ENCODE measurements at regions of chr4 and their contacts with region 1.

Region 1: DNA sequence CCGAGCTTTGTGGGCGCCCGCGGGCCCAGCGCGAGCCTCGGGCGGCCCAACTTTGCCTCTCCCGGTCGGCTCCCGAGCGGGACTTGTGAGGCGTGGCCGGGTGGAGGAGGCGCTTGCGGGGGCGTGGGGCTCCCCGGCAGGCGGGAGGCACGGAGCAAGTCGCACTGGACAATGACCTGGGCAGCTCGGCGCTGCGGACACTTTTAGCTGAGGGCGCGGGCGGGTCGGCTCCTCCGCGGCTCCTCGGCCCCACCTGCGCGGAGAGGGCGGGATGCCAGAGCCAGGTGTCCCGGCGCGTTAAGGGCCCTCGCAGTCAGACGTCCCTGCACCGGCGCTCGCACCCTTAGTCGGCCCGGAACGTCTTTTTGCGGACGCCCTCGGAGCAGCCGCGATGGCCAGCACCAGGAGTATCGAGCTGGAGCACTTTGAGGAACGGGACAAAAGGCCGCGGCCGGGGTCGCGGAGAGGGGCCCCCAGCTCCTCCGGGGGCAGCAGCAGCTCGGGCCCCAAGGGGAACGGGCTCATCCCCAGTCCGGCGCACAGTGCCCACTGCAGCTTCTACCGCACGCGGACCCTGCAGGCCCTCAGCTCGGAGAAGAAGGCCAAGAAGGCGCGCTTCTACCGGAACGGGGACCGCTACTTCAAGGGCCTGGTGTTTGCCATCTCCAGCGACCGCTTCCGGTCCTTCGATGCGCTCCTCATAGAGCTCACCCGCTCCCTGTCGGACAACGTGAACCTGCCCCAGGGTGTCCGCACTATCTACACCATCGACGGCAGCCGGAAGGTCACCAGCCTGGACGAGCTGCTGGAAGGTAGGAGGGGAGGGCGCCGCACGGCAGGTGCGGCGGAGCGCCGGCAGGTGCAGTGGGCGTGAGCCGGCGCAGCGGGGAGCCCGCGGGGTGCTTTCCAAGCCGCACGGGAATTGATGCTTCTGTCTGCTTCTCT is 664 bp downstream of the DCLK2 start:
- DNase-seq: peak; percentile 59 to 62
- H3K4me3 ChIP-seq: peak overlapping the region; percentile 53 to 84 (median 58)
- H3K27ac ChIP-seq: peak overlapping the region; percentile 74 to 88 (median 83)
- H3K4me1 ChIP-seq: peaks cover 4 to 10% of the 10 kb centered on the region in 2 donors
- H3K27me3 ChIP-seq: no peaks in the 10 kb centered on the region
- CTCF ChIP-seq: peak in 3 of 6 experiments; percentile 12 to 24 (median 21)
- POLR2A ChIP-seq: no peak

Region 2: GRCh38 chr4:150237110-150237857 is 158.4 kb after region 1 on chr4:
- intact Hi-C with region 1: loop called (anchors 10 kb)
- DNase-seq: no peak
- H3K4me3 ChIP-seq: no peak overlapping the region
- H3K27ac ChIP-seq: no peak overlapping the region
- H3K4me1 ChIP-seq: peaks cover 2% of the 10 kb centered on the region in 2 donors
- H3K27me3 ChIP-seq: no peaks in the 10 kb centered on the region
- CTCF ChIP-seq: no peak
- POLR2A ChIP-seq: no peak

Region 3: GRCh38 chr4:150619042-150619441 is 540.1 kb after region 1 on chr4:
- intact Hi-C with region 1: no loop called
- DNase-seq: no peak
- H3K4me3 ChIP-seq: no peak overlapping the region
- H3K27ac ChIP-seq: no peak overlapping the region
- H3K4me1 ChIP-seq: no peaks in the 10 kb centered on the region
- H3K27me3 ChIP-seq: no peaks in the 10 kb centered on the region
- CTCF ChIP-seq: no peak
- POLR2A ChIP-seq: no peak